Common myeloid progenitor, CD34-positive (primary cell): ENCODE measurements at regions of chr9 and their contacts with region 1.

Region 1: DNA sequence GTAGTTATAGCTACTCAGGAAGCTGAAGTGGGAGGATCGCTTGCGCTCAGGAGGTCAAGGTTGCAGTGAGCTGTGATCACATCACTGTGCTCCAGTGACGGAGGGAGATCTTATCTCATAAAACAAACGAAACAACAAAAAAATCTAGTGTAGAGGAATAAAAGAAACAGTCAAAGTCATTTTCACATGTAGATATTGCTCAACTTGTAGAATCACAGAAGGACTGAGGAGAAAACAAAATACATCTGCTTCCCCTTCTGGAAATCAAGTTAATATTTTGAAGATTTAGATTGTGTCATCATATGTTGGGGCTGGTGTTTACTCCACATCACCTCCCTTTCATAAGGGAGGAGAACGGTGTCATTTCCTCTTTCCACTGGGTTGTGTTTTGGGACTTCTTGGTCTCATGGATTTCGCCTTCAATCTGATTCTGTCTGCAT is 8.2 kb upstream of the SLC46A2 start:
- DNase-seq: peak in 2 of 3 donors; percentile 34 to 38
- H3K4me3 ChIP-seq: no peak overlapping the region
- H3K27ac ChIP-seq: no peak overlapping the region
- H3K4me1 ChIP-seq: peaks cover 0 to 11% (median 3%) of the 10 kb centered on the region in 4 experiments
- H3K27me3 ChIP-seq: peaks cover 0 to 29% (median 2%) of the 10 kb centered on the region in 5 experiments

Region 2: DNA sequence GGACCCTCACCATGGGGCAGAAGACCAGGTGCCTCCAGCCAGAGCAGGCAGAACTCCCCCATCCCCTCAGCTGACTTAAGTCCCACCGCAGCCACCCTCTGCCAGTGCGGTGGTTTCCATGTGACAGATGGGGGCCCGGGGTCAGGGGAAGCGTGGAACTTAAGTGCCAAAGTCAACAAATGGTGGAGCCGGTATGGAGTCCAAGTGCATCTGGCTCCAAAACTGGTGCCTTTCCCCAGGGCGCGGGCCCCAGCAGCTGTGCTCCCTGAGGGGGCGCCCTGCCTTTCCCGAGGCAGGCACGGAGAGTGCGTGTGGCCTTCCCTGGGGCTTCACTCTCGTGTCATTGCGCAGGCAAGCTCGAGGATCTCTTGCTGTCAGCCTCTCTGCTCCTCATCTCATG is 42.1 kb before region 1 on chr9:
- CTCF ChIA-PET with region 1: interaction called, 12 read pairs
- POLR2A ChIA-PET with region 1: no interaction called
- DNase-seq: no peak
- H3K4me3 ChIP-seq: no peak overlapping the region
- H3K27ac ChIP-seq: no peak overlapping the region
- H3K4me1 ChIP-seq: peaks cover 9 to 42% (median 15%) of the 10 kb centered on the region in 4 experiments
- H3K27me3 ChIP-seq: no peaks in the 10 kb centered on the region

Region 3: DNA sequence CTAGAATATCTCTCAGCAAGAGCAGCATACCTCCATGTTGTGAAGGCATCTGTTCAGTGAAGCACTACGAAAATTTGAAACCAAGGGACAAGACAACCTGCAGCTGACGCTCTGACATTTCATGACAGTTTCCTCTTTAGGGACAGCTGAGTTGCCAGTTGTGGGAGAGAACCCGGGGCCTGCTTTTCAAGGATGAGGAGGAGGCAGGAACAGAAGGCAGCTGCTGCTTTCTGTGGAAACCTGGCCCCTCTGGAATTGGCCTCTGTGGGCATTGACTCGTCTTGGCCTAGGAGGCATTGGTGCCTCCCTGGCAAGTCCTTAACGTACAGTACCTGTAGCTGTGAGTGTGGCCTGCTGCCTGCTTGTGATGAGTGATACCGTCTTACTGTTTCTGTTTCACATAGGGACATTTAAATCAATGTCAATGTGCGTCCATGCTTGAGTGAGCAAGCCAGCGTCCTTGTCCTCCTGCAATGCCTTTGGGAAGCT is 29.8 kb before region 1 on chr9:
- CTCF ChIA-PET with region 1: interaction called, 10 read pairs
- POLR2A ChIA-PET with region 1: no interaction called
- DNase-seq: no peak
- H3K4me3 ChIP-seq: no peak overlapping the region
- H3K27ac ChIP-seq: no peak overlapping the region
- H3K4me1 ChIP-seq: peaks cover 3 to 24% (median 6%) of the 10 kb centered on the region in 4 experiments
- H3K27me3 ChIP-seq: no peaks in the 10 kb centered on the region

Region 4: GRCh38 chr9:112887381-112887780 is 11.5 kb before region 1 on chr9:
- CTCF ChIA-PET with region 1: interaction called, 11 read pairs
- POLR2A ChIA-PET with region 1: interaction called, 4 read pairs
- DNase-seq: peak; percentile 28 to 58 (median 36)
- H3K4me3 ChIP-seq: no peak overlapping the region
- H3K27ac ChIP-seq: no peak overlapping the region
- H3K4me1 ChIP-seq: peaks cover 0 to 15% (median 11%) of the 10 kb centered on the region in 4 experiments
- H3K27me3 ChIP-seq: peaks cover 0 to 43% (median 14%) of the 10 kb centered on the region in 5 experiments

Region 5: GRCh38 chr9:112921549-112921948 is 22.7 kb after region 1 on chr9:
- CTCF ChIA-PET with region 1: interaction called, 12 read pairs
- POLR2A ChIA-PET with region 1: no interaction called
- DNase-seq: peak; percentile 61 to 80 (median 78)
- H3K4me3 ChIP-seq: no peak overlapping the region
- H3K27ac ChIP-seq: no peak overlapping the region
- H3K4me1 ChIP-seq: no peaks in the 10 kb centered on the region
- H3K27me3 ChIP-seq: peaks cover 0 to 4% (median 0%) of the 10 kb centered on the region in 5 experiments

Region 6: DNA sequence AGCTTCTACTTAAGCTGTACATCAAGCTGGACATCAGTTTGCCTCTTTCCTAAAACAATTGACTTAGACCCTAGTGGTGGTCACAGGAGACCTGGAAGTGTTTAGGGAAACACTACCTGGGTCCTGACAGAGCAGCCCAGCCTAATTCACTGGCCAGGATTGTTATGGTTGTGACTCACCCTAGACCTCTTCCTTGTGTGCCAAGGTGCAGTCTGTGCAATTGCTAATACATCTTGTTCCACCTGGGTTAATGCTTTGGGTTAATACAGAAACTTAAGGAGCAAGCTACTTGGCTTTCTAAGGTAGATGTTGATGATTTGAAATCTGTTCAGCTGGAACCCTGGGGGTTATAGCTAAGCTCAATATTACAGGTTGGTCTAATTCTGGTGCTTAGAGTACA is 40.5 kb after region 1 on chr9:
- CTCF ChIA-PET with region 1: no interaction called
- POLR2A ChIA-PET with region 1: no interaction called
- DNase-seq: no peak
- H3K4me3 ChIP-seq: no peak overlapping the region
- H3K27ac ChIP-seq: no peak overlapping the region
- H3K4me1 ChIP-seq: peaks cover 0 to 4% (median 1%) of the 10 kb centered on the region in 4 experiments
- H3K27me3 ChIP-seq: no peaks in the 10 kb centered on the region

Region 7: DNA sequence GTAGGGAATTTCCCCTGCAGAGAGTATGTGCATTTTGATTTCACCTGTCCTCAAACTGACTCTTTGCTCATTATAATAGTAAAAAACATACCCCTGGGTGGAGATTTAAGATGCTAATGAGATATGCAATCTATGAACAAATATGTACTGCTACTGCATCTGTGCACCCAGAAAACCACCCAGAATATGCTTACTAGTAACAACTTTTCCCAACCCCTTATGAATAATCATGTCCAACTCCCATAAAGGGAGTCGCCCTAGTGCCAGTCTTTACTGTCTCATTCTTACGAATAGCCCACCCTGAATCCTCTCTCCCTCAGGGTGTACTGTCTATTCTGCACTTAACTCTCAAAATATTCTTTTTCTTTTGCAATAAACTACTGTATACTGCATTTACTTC is 196.7 kb after region 1 on chr9:
- CTCF ChIA-PET with region 1: no interaction called
- POLR2A ChIA-PET with region 1: no interaction called
- DNase-seq: no peak
- H3K4me3 ChIP-seq: no peak overlapping the region
- H3K27ac ChIP-seq: no peak overlapping the region
- H3K4me1 ChIP-seq: no peaks in the 10 kb centered on the region
- H3K27me3 ChIP-seq: peaks cover 6 to 83% (median 12%) of the 10 kb centered on the region in 5 experiments

Region 8: DNA sequence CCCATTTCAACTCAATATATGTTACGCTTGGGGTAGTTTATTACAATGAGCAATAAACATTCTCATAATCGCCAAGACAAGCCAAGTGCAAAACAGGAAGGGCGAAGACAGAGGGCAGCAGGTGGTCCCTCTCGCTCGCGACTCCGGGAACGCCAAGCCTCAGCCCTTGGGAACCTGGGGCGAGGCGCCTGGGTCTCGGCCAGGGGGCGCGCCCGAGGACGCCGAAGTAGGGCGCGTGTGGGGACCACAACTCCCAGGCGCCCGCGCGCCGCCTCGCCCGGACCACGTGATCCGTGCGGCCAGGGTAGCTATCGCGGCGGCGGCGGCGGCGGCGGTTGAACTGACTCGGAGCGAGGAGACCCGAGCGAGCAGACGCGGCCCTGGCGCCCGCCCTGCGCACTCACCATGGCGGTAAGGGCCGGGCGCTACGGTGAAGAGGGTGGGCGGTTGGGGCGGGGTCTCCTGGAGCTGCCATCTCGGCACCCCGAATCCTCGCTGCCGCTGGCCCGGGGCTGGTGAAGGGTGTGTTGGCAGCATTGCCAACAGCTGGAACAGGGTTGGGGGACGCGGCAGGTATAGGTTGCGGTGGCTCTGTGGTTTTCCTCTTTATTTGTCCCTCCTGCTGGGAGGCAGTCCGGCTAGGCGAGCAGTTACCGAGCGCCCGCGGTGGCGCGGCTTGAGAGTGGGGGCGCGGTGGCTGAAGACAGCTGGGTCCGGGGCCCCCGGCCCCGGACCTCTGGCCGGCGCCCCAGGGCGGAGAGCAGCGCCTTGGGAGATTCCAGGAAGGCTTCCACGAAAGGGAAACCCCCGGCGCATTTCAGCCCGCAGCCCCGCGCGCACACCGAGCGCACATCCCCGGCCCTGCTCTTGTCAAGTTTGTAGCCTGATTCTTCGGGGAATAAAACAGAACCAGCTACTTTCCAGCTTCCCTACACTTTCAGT is 252.0 kb after region 1 on chr9 and contains the start of gene SLC31A2:
- CTCF ChIA-PET with region 1: no interaction called
- POLR2A ChIA-PET with region 1: no interaction called
- DNase-seq: peak; percentile 88 to 94 (median 92)
- H3K4me3 ChIP-seq: peak within 1 kb of the TSS; percentile 58 to 95 (median 82)
- H3K27ac ChIP-seq: peak within 1 kb of the TSS in 1 of 2 experiments; percentile 63
- H3K4me1 ChIP-seq: peaks cover 12 to 46% (median 32%) of the 10 kb centered on the region in 4 experiments
- H3K27me3 ChIP-seq: peaks cover 0 to 4% (median 0%) of the 10 kb centered on the region in 5 experiments